ENCODE measurements at regions of chr15 and their contacts with region 1.

Region 1: GRCh38 chr15:46946953-46947352 is 770.4 kb upstream of the SEMA6D start:
- DNase-seq: no peak
- ATAC-seq: no peak
- H3K4me3 ChIP-seq: no peak overlapping the region
- H3K27ac ChIP-seq: no peak overlapping the region
- H3K4me1 ChIP-seq: no peaks in the 10 kb centered on the region
- H3K27me3 ChIP-seq: no peaks in the 10 kb centered on the region
- CTCF ChIP-seq: no peak
- POLR2A ChIP-seq: no peak

Region 2: DNA sequence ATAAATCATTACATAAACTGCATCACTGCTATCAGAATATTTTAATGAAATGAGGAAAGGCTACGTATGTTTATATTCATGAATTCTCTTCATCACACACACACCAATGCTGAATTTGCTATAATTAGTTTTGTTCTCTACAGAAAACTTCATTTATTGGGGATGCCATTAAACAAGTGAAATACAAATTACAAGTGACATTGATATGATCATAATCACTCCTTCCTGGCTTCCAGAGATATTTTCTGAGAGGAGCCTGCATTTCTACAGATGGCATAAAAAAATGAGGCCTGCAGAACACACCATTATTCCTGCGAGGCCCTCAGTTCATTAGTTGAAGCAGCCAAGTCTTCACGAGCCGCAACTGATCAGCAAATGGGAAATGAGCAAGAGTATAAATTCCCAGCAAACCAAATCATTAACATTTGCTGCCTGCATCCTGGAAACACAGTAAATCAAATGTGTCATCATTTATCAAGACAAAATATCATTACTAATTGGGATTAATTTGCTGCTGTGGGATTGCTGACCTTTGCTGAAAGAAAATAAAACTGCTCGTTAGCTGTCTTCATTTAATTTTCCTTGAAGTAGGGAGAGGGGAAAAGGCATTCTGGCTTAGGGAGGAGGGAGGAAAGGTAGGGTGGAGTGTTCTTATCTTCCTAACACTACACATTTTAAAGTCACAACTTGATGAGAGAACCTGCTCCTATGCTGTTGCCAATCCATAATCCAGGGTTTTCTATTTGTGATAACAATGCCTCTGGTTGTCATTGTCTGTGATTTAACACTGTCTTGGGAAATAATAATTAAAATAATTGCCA is 390.2 kb before region 1 on chr15:
- intact Hi-C with region 1: loop called in 1 of 10 experiments (anchors 10 kb)
- DNase-seq: no peak
- ATAC-seq: no peak
- H3K4me3 ChIP-seq: no peak overlapping the region
- H3K27ac ChIP-seq: no peak overlapping the region
- H3K4me1 ChIP-seq: no peaks in the 10 kb centered on the region
- H3K27me3 ChIP-seq: no peaks in the 10 kb centered on the region
- CTCF ChIP-seq: no peak
- POLR2A ChIP-seq: no peak

Region 3: GRCh38 chr15:46786590-46787285 is 160.2 kb before region 1 on chr15:
- intact Hi-C with region 1: no loop called
- DNase-seq: peak in 1 of 5 donors; percentile 20
- ATAC-seq: peak in 1 of 4 donors; percentile 67
- H3K4me3 ChIP-seq: no peak overlapping the region
- H3K27ac ChIP-seq: no peak overlapping the region
- H3K4me1 ChIP-seq: no peaks in the 10 kb centered on the region
- H3K27me3 ChIP-seq: peaks cover 0 to 3% (median 0%) of the 10 kb centered on the region in 9 donors
- CTCF ChIP-seq: peak in 6 of 12 donors; percentile 29 to 44 (median 34)
- POLR2A ChIP-seq: no peak

Region 4: GRCh38 chr15:46892687-46893086 is 54.3 kb before region 1 on chr15:
- intact Hi-C with region 1: no loop called
- DNase-seq: no peak
- ATAC-seq: no peak
- H3K4me3 ChIP-seq: no peak overlapping the region
- H3K27ac ChIP-seq: no peak overlapping the region
- H3K4me1 ChIP-seq: no peaks in the 10 kb centered on the region
- H3K27me3 ChIP-seq: no peaks in the 10 kb centered on the region
- CTCF ChIP-seq: no peak
- POLR2A ChIP-seq: no peak

Region 5: GRCh38 chr15:47349179-47349578 is 402.2 kb after region 1 on chr15:
- intact Hi-C with region 1: no loop called
- DNase-seq: no peak
- ATAC-seq: no peak
- H3K4me3 ChIP-seq: no peak overlapping the region
- H3K27ac ChIP-seq: no peak overlapping the region
- H3K4me1 ChIP-seq: no peaks in the 10 kb centered on the region
- H3K27me3 ChIP-seq: no peaks in the 10 kb centered on the region
- CTCF ChIP-seq: no peak
- POLR2A ChIP-seq: no peak

Measured in heart left ventricle (tissue), 16 donors.